HAP-1 (cell line): ENCODE measurements at regions of chr2 and their contacts with region 1.

Region 1: GRCh38 chr2:26144953-26145680 is 27.8 kb upstream of the GAREM2 start:
- DNase-seq: peak; percentile 68 to 82
- H3K4me3 ChIP-seq: no peak overlapping the region
- H3K4me1 ChIP-seq: peaks cover 3% of the 10 kb centered on the region; the same call in 1 of the 2 replicates
- H3K27me3 ChIP-seq: peaks cover 2% of the 10 kb centered on the region; the same call in 1 of the 2 replicates

Region 2: GRCh38 chr2:25521665-25522387 is 623.3 kb before region 1 on chr2:
- in situ Hi-C with region 1: no loop called
- DNase-seq: peak; percentile 41 to 51
- H3K4me3 ChIP-seq: no peak overlapping the region
- H3K4me1 ChIP-seq: 0 out of 2 replicates have a peak, but pooled peaks cover 3% of the 10 kb centered on the region
- H3K27me3 ChIP-seq: no peaks in the 10 kb centered on the region

Region 3: GRCh38 chr2:25851740-25852503 is 293.2 kb before region 1 on chr2:
- in situ Hi-C with region 1: loop called (anchors 10 kb)
- DNase-seq: peak; percentile 30 to 68
- H3K4me3 ChIP-seq: no peak overlapping the region
- H3K4me1 ChIP-seq: peaks cover 8% of the 10 kb centered on the region
- H3K27me3 ChIP-seq: no peaks in the 10 kb centered on the region; the same call in 1 of the 2 replicates

Region 4: DNA sequence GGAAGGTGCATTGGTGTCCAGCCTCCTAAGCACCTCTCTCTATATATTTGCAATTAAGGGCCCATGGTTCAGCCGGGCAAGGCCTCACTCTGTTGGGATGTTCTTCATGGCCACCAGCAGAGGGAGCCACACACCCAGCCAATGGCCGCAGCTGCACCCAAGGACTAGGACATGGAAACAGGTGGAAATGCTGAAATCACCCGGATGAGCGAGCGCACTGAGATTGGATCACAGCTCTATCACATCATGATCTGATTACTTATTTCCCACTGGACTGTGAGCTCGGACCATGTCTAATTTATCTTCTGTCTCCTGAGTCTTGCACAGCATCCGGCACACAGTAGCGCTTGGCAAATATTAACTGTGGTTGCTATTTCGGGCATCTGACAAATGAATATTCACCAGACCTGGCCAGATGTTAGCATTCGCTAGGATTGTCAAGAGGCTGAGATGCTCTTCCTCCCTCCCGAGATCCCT is 194.0 kb before region 1 on chr2:
- in situ Hi-C with region 1: loop called (anchors 5 kb)
- DNase-seq: peak; percentile 76 to 90
- H3K4me3 ChIP-seq: no peak overlapping the region
- H3K4me1 ChIP-seq: peaks cover 9% of the 10 kb centered on the region
- H3K27me3 ChIP-seq: no peaks in the 10 kb centered on the region

Region 5: GRCh38 chr2:25991965-25992364 is 153.2 kb before region 1 on chr2:
- in situ Hi-C with region 1: loop called (anchors 5 kb)
- DNase-seq: no peak
- H3K4me3 ChIP-seq: no peak overlapping the region
- H3K4me1 ChIP-seq: no peaks in the 10 kb centered on the region; the same call in 1 of the 2 replicates
- H3K27me3 ChIP-seq: no peaks in the 10 kb centered on the region